Dendritic cell treated with granulocyte-macrophage colony-stimulating factor and Interleukin-4, amounts not matched to agents 40 ng/mL and 50 ng/mL, for 4 days (primary cell): ENCODE measurements at regions of chr18 and their contacts with region 1.

Region 1: DNA sequence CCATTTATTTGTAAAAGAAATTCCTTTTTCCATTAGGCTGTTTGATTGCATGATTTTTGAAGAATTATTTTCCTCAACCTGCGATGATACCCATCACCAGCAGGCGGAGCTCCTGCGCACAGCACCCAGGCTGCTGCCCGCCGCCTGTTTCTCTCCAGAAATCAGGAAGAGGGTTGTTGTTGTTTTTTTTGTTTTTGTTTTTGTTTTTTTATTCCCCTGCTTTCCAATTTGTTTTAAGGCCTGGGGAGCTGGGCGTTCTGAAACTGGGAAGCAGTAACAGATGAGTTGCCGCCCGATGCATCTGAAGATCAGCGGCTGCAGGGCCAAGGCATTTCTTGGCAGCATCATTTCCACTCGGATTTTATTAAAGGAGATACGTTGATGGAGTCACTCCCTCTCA is 132.1 kb downstream of the MBP start:
- H3K4me3 Mint-ChIP-seq: no peak overlapping the region
- H3K27ac Mint-ChIP-seq: peak overlapping the region; percentile 77
- H3K4me1 Mint-ChIP-seq: peaks cover 48% of the 10 kb centered on the region
- H3K27me3 Mint-ChIP-seq: no peaks in the 10 kb centered on the region

Region 2: DNA sequence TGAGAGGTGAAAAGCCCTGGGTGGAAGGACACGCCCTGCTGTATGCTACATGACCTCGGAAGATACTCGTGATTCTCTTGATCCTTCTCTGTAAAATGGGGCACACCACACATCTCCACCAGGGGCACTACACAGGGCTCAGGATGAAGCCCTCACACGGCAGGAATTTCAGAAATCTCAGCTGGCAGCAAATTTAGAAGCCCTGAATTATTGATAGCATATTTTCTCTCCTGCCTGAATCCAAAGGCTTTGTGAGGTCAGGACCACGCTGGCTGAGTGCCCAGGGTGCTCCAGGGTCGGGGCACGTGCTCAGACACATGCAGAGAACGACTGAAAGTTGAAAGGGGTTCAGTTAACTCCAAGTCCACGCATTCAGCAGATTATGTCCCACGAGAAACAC is 207.0 kb after region 1 on chr18:
- intact Hi-C with region 1: loop called (anchors 5 kb)
- H3K4me3 Mint-ChIP-seq: no peak overlapping the region
- H3K27ac Mint-ChIP-seq: peak overlapping the region; percentile 63
- H3K4me1 Mint-ChIP-seq: peaks cover 53% of the 10 kb centered on the region
- H3K27me3 Mint-ChIP-seq: peaks cover 5% of the 10 kb centered on the region